Dendritic cell treated with granulocyte-macrophage colony-stimulating factor and Interleukin-4, amounts not matched to agents 40 ng/mL and 50 ng/mL, for 4 days (primary cell): ENCODE measurements at regions of chr11 and their contacts with region 1.

Region 1: DNA sequence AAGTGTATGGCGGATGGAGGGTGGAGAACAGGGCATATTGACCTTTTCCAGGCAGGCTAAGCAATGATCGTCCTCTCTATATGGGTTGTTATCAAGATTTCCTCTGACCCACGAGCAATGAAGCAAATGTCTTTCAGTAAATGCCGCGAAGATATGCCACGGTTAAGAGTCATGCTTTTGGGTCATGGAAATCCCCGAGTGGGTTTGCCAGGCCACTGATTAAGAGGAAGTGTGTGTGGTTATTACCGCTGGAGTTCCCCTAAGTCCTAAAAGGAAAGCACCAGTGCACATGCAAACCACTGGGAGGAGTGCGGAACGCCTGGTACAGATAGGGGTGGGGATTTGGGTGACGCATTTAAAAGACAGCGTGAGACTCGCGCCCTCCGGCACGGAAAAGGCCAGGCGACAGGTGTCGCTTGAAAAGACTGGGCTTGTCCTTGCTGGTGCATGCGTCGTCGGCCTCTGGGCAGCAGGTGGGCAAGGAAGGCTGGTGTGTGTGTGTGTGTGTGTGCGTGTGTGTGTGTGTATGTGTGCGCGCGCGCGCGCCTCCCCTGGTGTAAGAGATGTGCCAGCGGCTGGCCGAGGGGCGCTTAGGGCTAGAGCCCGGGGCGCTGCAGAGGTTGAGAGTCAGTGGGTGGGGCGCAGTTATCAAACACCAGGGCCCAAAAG is at the start of gene BIRC3:
- H3K4me3 Mint-ChIP-seq: peak within 1 kb of the TSS; percentile 99
- H3K27ac Mint-ChIP-seq: peak within 1 kb of the TSS; percentile 92
- H3K4me1 Mint-ChIP-seq: peaks cover 57% of the 10 kb centered on the region
- H3K27me3 Mint-ChIP-seq: no peaks in the 10 kb centered on the region

Region 2: GRCh38 chr11:102287964-102288724 is 29.1 kb before region 1 on chr11:
- intact Hi-C with region 1: loop called (anchors 2 kb)
- H3K4me3 Mint-ChIP-seq: no peak overlapping the region
- H3K27ac Mint-ChIP-seq: no peak overlapping the region
- H3K4me1 Mint-ChIP-seq: peaks cover 46% of the 10 kb centered on the region
- H3K27me3 Mint-ChIP-seq: no peaks in the 10 kb centered on the region

Region 3: GRCh38 chr11:102293873-102294601 is 23.2 kb before region 1 on chr11:
- intact Hi-C with region 1: loop called (anchors 1 kb)
- H3K4me3 Mint-ChIP-seq: no peak overlapping the region
- H3K27ac Mint-ChIP-seq: peak overlapping the region; percentile 72
- H3K4me1 Mint-ChIP-seq: peaks cover 36% of the 10 kb centered on the region
- H3K27me3 Mint-ChIP-seq: no peaks in the 10 kb centered on the region

Region 4: DNA sequence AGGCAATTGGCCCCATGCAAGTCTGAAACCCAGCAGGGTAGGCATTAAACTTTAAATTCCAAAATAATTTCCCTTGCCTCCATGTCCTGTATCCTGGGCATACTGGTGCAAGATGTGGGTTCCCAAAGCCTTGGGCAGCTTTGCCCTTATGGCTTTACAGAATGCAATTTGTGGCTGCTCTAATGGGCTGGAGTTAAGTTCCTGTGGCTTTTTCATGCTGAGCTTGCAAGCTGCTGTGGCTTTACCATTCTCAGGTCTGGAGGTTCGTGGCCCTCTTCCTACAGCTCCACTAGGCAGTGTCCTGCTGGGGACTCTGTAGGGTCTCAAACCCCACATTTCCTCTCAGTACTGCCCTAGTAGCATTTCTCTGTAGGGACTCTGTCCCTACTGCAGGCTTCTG is 15.0 kb before region 1 on chr11:
- intact Hi-C with region 1: loop called (anchors 2 kb)
- H3K4me3 Mint-ChIP-seq: no peak overlapping the region
- H3K27ac Mint-ChIP-seq: no peak overlapping the region
- H3K4me1 Mint-ChIP-seq: peaks cover 46% of the 10 kb centered on the region
- H3K27me3 Mint-ChIP-seq: peaks cover 11% of the 10 kb centered on the region

Region 5: GRCh38 chr11:102451681-102452460 is 134.6 kb after region 1 on chr11:
- intact Hi-C with region 1: no loop called
- H3K4me3 Mint-ChIP-seq: peak overlapping the region; percentile 95
- H3K27ac Mint-ChIP-seq: peak overlapping the region; percentile 96
- H3K4me1 Mint-ChIP-seq: peaks cover 67% of the 10 kb centered on the region
- H3K27me3 Mint-ChIP-seq: no peaks in the 10 kb centered on the region